Heart right ventricle (tissue), 16 donors: ENCODE measurements at regions of chr4 and their contacts with region 1.

Region 1: GRCh38 chr4:30714408-30715027 is 5.7 kb upstream of the PCDH7 start:
- DNase-seq: peak in 1 of 2 donors; percentile 18
- ATAC-seq: peak in 1 of 8 donors; percentile 48
- H3K4me3 ChIP-seq: no peak overlapping the region
- H3K27ac ChIP-seq: no peak overlapping the region
- H3K4me1 ChIP-seq: peaks cover 0 to 27% (median 14%) of the 10 kb centered on the region in 9 donors
- H3K27me3 ChIP-seq: peaks cover 0 to 31% (median 17%) of the 10 kb centered on the region in 7 donors
- CTCF ChIP-seq: peak; percentile 28 to 72 (median 64)

Region 2: GRCh38 chr4:30854531-30854930 is 140.0 kb after region 1 on chr4:
- intact Hi-C with region 1: no loop called
- DNase-seq: no peak
- ATAC-seq: no peak
- H3K4me3 ChIP-seq: no peak overlapping the region
- H3K27ac ChIP-seq: no peak overlapping the region
- H3K4me1 ChIP-seq: peaks cover 0 to 8% (median 0%) of the 10 kb centered on the region in 9 donors
- H3K27me3 ChIP-seq: no peaks in the 10 kb centered on the region
- CTCF ChIP-seq: no peak

Region 3: DNA sequence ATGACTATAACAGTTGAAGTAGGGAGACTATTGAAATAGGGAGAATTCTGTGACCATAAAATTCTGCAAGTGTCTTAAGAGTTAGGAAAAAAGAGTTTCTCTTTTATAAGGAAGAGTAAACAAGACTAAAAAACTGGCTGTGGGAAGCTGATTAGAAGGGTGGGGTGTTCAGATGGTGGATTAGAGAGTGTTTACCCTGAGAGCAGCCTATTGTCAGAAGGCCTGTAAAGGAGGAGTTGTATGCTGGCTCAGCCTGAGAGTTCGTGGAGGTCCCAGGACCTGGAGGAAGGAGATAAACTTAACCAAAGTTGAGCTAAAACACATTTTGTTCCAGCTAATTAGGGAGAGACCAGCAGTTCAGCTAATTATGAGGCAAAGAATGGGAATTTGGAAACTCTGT is 635.4 kb after region 1 on chr4:
- intact Hi-C with region 1: loop called in 1 of 10 experiments (anchors 10 kb)
- DNase-seq: no peak
- ATAC-seq: peak in 2 of 8 donors; percentile 54 to 63
- H3K4me3 ChIP-seq: no peak overlapping the region
- H3K27ac ChIP-seq: peak overlapping the region in 1 of 10 donors; percentile 17
- H3K4me1 ChIP-seq: no peaks in the 10 kb centered on the region
- H3K27me3 ChIP-seq: no peaks in the 10 kb centered on the region
- CTCF ChIP-seq: no peak

Region 4: GRCh38 chr4:31692402-31692940 is 978.0 kb after region 1 on chr4:
- intact Hi-C with region 1: loop called in 1 of 10 experiments (anchors 10 kb)
- DNase-seq: no peak
- ATAC-seq: no peak
- H3K4me3 ChIP-seq: no peak overlapping the region
- H3K27ac ChIP-seq: no peak overlapping the region
- H3K4me1 ChIP-seq: no peaks in the 10 kb centered on the region
- H3K27me3 ChIP-seq: no peaks in the 10 kb centered on the region
- CTCF ChIP-seq: peak in 4 of 9 donors; percentile 19 to 42 (median 34)